Spleen (tissue), 13 donors: ENCODE measurements at regions of chr3 and their contacts with region 1.

Region 1: GRCh38 chr3:43223670-43224364 is 62.5 kb upstream of the SNRK start:
- DNase-seq: no peak
- H3K4me3 ChIP-seq: no peak overlapping the region
- H3K27ac ChIP-seq: no peak overlapping the region
- H3K4me1 ChIP-seq: peaks cover 0 to 22% (median 5%) of the 10 kb centered on the region in 6 donors
- H3K27me3 ChIP-seq: no peaks in the 10 kb centered on the region
- CTCF ChIP-seq: peak in 9 of 11 experiments; percentile 37 to 55 (median 43)
- POLR2A ChIP-seq: no peak

Region 2: DNA sequence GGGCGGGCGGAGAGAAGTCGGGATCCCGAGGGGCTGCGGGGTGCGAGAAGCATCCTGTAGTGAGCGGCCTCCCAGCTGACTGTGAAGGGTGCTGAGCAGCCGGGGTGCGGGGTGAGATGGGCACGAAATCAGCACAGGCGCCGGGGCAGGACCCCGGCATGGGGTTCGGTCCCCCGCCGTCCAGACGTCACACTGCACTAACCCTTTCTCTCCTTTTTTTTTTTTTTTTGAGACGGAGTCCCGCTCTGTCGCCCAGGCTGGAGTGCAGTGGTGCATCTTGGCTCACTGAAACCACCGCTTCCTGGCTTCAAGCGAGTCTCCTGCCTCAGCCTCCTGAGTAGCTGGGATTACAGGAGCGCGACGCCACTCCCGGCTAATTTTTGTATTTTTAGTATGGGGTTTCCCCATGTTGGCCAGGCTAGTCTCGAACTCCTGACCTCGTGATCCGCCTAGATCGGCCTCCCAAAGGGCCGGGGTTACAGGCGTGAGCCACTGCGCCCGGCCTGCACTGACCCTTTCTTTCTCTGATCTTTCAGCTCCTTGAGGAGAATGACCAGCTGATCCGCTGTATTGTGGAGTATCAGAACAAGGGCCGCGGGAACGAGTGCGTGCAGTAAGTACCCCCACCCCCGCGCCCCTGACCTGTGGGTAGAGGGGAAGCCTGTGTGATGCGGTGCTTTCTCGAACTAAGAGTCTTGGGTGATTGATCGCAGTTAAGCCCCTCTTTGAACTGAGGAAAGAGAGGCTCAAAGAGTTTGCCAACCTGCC is 632.6 kb before region 1 on chr3:
- intact Hi-C with region 1: no loop called
- DNase-seq: peak; percentile 87
- H3K4me3 ChIP-seq: peak overlapping the region; percentile 47 to 84 (median 70)
- H3K27ac ChIP-seq: peak overlapping the region; percentile 51 to 94 (median 90)
- H3K4me1 ChIP-seq: peaks cover 15 to 42% (median 27%) of the 10 kb centered on the region in 6 donors
- H3K27me3 ChIP-seq: no peaks in the 10 kb centered on the region
- CTCF ChIP-seq: no peak
- POLR2A ChIP-seq: no peak

Region 3: DNA sequence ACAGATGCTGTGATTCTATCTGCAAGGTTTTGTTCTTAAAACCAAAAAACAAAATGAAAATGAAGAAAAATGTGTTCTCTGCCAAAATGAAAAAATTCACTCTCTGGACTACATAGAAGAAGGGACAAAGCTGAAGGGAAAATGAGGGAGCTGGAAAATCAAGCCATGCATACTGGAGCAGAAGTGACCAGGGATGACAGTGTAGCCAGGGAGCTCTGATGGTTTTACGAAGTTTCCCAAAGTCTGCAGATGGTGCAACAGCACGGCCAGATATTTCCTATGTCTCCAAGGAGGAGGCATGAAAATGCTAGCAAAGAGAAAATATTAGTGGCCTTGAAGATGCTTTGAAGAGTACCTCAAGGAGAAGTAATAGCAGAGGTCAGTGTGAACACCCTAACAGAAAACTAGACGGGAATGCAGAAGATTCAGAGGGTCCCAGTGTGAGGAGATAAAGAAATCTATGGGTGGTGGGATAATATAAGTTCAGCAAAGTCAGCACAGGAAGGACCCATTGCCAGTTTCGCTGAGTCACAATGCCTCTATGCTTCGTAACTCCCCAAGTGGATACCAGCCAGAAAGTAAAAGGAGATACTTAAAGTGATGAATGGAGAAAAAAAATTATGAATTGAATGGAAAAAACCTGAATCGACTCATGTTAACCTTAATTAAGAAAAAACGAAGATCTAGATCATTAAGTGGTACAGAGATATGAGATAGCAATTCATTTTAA is 78.9 kb before region 1 on chr3:
- intact Hi-C with region 1: no loop called
- DNase-seq: no peak
- H3K4me3 ChIP-seq: no peak overlapping the region
- H3K27ac ChIP-seq: no peak overlapping the region
- H3K4me1 ChIP-seq: no peaks in the 10 kb centered on the region
- H3K27me3 ChIP-seq: no peaks in the 10 kb centered on the region
- CTCF ChIP-seq: no peak
- POLR2A ChIP-seq: no peak

Region 4: DNA sequence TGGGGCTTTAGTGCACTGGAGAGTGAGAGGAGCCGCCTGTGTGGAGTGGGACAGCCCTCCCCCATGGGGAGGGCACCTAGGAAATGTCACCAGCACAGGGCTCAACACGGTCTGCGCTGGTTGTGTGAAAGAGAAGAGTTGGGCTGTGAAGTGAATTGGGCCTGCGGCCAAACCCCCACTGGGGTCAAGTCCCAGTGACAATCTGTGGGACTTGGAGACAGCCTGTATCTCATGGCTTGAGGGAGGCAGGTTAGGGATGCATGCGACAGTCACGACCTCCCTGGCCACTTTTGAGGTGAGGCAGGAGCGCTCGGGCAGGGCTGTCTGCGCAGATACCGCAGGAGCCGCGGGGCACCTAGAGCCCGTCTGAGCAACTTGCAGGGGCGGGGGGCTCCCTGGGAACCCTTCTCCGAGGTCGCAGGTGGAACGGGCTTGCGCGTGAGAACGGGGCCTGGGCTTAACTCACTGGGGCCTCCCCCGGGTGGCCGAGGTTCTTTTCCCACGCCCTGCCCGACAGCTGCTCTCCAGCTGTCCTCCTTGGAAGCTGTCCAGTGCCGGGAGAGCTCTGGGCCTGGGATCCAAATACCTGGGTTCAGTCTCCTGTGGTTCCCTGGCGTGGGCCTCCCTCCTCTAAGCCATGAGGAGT is 139.9 kb after region 1 on chr3:
- intact Hi-C with region 1: loop called (anchors 10 kb)
- DNase-seq: no peak
- H3K4me3 ChIP-seq: no peak overlapping the region
- H3K27ac ChIP-seq: peak overlapping the region in 3 of 8 donors; percentile 4 to 59 (median 32)
- H3K4me1 ChIP-seq: peaks cover 0 to 26% (median 2%) of the 10 kb centered on the region in 6 donors
- H3K27me3 ChIP-seq: no peaks in the 10 kb centered on the region
- CTCF ChIP-seq: no peak
- POLR2A ChIP-seq: no peak